Naive thymus-derived CD8-positive, alpha-beta T cell (primary cell): ENCODE measurements at regions of chr7 and their contacts with region 1.

Region 1: GRCh38 chr7:149090397-149091195 is at the start of gene ZNF786:
- DNase-seq: peak; percentile 88 to 95 (median 93)
- ATAC-seq: peak; percentile 84 to 85
- H3K4me3 Mint-ChIP-seq: peak within 1 kb of the TSS; percentile 94 to 100 (median 100)
- H3K27ac Mint-ChIP-seq: peak within 1 kb of the TSS; percentile 96 to 100 (median 99)
- H3K4me1 Mint-ChIP-seq: peaks cover 15 to 42% (median 35%) of the 10 kb centered on the region in 4 donors
- H3K27me3 Mint-ChIP-seq: no peaks in the 10 kb centered on the region
- polyA plus RNA-seq, gene ZNF786: 5.9 to 18.4 (median 8.8) TPM

Region 2: GRCh38 chr7:148931470-148931869 is 159.1 kb before region 1 on chr7:
- POLR2A ChIA-PET with region 1: interaction called, 10 read pairs
- DNase-seq: no peak
- ATAC-seq: no peak
- H3K4me3 Mint-ChIP-seq: no peak overlapping the region
- H3K27ac Mint-ChIP-seq: peak overlapping the region in 1 of 10 donors; percentile 58
- H3K4me1 Mint-ChIP-seq: peaks cover 0 to 9% (median 4%) of the 10 kb centered on the region in 4 donors
- H3K27me3 Mint-ChIP-seq: no peaks in the 10 kb centered on the region

Region 3: GRCh38 chr7:149028346-149029109 is 62.1 kb before region 1 on chr7 and contains the start of gene PDIA4:
- POLR2A ChIA-PET with region 1: interaction called, 10 read pairs
- DNase-seq: peak; percentile 98 to 99 (median 99)
- ATAC-seq: peak; percentile 88 to 89
- H3K4me3 Mint-ChIP-seq: peak within 1 kb of the TSS; percentile 90 to 96 (median 92)
- H3K27ac Mint-ChIP-seq: peak within 1 kb of the TSS; percentile 87 to 97 (median 95)
- H3K4me1 Mint-ChIP-seq: peaks cover 26 to 50% (median 45%) of the 10 kb centered on the region in 4 donors
- H3K27me3 Mint-ChIP-seq: no peaks in the 10 kb centered on the region
- polyA plus RNA-seq, gene PDIA4: 80.3 to 94.0 (median 89.5) TPM

Region 4: GRCh38 chr7:149077594-149077993 is 13.0 kb before region 1 on chr7:
- POLR2A ChIA-PET with region 1: no interaction called
- DNase-seq: no peak
- ATAC-seq: no peak
- H3K4me3 Mint-ChIP-seq: no peak overlapping the region
- H3K27ac Mint-ChIP-seq: no peak overlapping the region
- H3K4me1 Mint-ChIP-seq: peaks cover 0 to 36% (median 18%) of the 10 kb centered on the region in 4 donors
- H3K27me3 Mint-ChIP-seq: no peaks in the 10 kb centered on the region

Region 5: DNA sequence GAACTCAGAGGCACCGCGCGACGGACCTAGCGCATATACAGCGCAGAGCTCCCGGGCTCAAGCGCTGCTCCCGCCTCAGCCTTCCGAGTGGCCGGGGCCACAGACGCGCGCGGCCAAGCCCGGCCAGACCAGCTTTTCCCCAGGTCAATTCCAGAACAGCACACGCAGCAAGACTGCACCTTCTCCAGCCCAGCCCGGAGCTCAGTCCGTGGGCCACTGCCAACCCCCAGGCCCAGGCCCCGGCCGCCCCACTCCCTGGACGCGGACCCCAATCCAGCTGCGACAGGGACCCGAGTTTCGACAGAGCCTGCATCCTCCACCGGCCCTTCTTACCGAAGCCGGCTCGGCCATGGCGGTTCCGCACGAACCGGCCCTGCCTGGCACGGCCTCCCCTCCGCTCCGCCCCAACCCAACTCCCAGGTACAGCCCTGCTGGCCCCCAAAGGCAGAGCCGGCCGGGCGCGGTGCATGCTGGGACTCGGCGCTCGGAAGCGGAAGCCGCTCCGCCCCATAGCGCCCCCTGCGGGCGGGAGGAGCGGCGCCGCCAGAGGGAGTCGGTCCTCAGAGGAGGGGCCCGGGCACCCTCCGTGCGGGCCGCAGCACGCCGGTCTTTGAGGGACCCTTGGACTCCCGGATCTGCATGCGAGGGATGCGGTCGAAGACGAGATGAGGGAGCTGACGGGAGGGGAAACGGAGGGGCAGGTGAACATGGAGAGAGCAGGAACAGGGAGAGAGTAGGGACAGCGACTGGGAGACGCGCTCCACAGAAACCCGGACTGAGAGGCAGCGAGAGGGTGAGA is 35.5 kb after region 1 on chr7 and contains the start of gene ZNF425:
- POLR2A ChIA-PET with region 1: interaction called, 17 read pairs
- DNase-seq: peak; percentile 87 to 99 (median 93)
- ATAC-seq: peak; percentile 85 to 86
- H3K4me3 Mint-ChIP-seq: peak within 1 kb of the TSS; percentile 89 to 100 (median 99)
- H3K27ac Mint-ChIP-seq: peak within 1 kb of the TSS; percentile 92 to 100 (median 98)
- H3K4me1 Mint-ChIP-seq: peaks cover 21 to 38% (median 25%) of the 10 kb centered on the region in 4 donors
- H3K27me3 Mint-ChIP-seq: no peaks in the 10 kb centered on the region
- polyA plus RNA-seq, gene ZNF425: 0.65 to 1.8 (median 1.0) TPM

Region 6: GRCh38 chr7:149147072-149147751 is 56.6 kb after region 1 on chr7 and contains the start of gene ZNF398:
- POLR2A ChIA-PET with region 1: interaction called, 12 read pairs
- DNase-seq: peak; percentile 70 to 88 (median 83)
- ATAC-seq: peak; percentile 77 to 80
- H3K4me3 Mint-ChIP-seq: peak within 1 kb of the TSS; percentile 89 to 94 (median 92)
- H3K27ac Mint-ChIP-seq: peak within 1 kb of the TSS; percentile 90 to 98 (median 95)
- H3K4me1 Mint-ChIP-seq: peaks cover 15 to 42% (median 35%) of the 10 kb centered on the region in 4 donors
- H3K27me3 Mint-ChIP-seq: no peaks in the 10 kb centered on the region
- polyA plus RNA-seq, gene ZNF398: 6.9 to 9.7 (median 7.6) TPM

Region 7: DNA sequence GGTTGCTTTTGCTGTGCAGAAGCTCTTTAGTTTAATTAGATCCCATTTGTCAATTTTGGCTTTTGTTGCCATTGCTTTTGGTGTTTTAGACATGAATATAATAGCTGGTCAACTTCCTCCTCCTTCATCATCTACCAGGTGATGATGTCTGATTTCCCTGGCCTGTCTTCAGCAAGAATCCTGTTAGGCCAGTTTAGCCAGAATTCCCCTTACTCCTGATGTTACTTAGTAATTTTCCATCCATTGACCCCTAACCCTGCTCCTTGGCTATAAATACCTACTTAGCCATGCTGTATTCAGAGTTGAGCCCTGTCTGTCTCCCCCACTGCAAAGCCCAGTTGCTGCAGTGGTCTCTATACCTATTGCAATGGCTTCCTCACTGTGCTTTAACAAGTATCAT is 278.9 kb after region 1 on chr7:
- POLR2A ChIA-PET with region 1: no interaction called
- DNase-seq: no peak
- ATAC-seq: no peak
- H3K4me3 Mint-ChIP-seq: no peak overlapping the region
- H3K27ac Mint-ChIP-seq: peak overlapping the region in 1 of 10 donors; percentile 17
- H3K4me1 Mint-ChIP-seq: no peaks in the 10 kb centered on the region
- H3K27me3 Mint-ChIP-seq: peaks cover 4 to 10% (median 7%) of the 10 kb centered on the region in 5 donors